K562 (cell line): ENCODE measurements at regions of chr9 and their contacts with region 1.

Region 1: GRCh38 chr9:33816327-33817252 is at the start of gene UBE2R2:
- DNase-seq: peak; percentile 92 to 96 (median 94)
- ATAC-seq: peak; percentile 87
- H3K4me3 ChIP-seq: peak within 1 kb of the TSS; percentile 85
- H3K27ac ChIP-seq: peak within 1 kb of the TSS; percentile 92
- H3K4me1 ChIP-seq: peaks cover 11 to 18% of the 10 kb centered on the region in 2 experiments; a peak in 4 of 5 replicates
- H3K27me3 ChIP-seq: no peaks in the 10 kb centered on the region
- CTCF ChIP-seq: no peak
- EP300 ChIP-seq: no peak
- POLR2A ChIP-seq: peak; percentile 82
- RAD21 ChIP-seq: no peak
- polyA plus RNA-seq, gene UBE2R2: 7.8 to 8.4 TPM

Region 2: DNA sequence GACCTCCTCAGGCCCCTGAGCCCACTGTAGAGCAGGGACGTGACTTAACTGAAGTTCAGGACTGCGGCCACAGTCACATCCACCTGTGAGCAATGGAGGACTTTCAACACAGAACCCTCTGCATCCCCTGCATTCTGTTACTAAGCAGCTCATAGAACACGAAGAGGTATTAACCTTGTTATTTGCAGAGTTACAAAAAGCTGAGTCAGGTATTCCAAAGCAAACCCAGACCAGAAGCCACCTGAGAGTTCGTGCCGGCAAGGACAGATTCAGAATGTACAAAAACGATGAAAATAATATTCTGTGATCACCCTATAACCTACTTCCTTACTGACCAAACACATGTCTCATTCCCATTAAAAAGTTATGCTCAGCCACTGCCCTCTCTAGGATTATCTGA is 54.2 kb before region 1 on chr9:
- CTCF ChIA-PET with region 1: no interaction called
- POLR2A ChIA-PET with region 1: no interaction called
- in situ Hi-C with region 1: no loop called
- intact Hi-C with region 1: no loop called
- DNase-seq: no peak
- ATAC-seq: no peak
- H3K4me3 ChIP-seq: no peak overlapping the region
- H3K27ac ChIP-seq: no peak overlapping the region
- H3K4me1 ChIP-seq: no peaks in the 10 kb centered on the region
- H3K27me3 ChIP-seq: no peaks in the 10 kb centered on the region
- CTCF ChIP-seq: no peak
- EP300 ChIP-seq: no peak
- POLR2A ChIP-seq: no peak
- RAD21 ChIP-seq: no peak

Region 3: GRCh38 chr9:33852216-33852826 is 35.7 kb after region 1 on chr9:
- CTCF ChIA-PET with region 1: interaction called, 3 read pairs
- POLR2A ChIA-PET with region 1: interaction called, 7 read pairs
- in situ Hi-C with region 1: no loop called
- intact Hi-C with region 1: loop called (anchors 1 kb)
- DNase-seq: peak in 2 of 4 experiments; percentile 19 to 54
- ATAC-seq: peak; percentile 79
- H3K4me3 ChIP-seq: no peak overlapping the region
- H3K27ac ChIP-seq: no peak overlapping the region
- H3K4me1 ChIP-seq: peaks cover 0 to 2% of the 10 kb centered on the region in 2 experiments; a peak in 2 of 5 replicates
- H3K27me3 ChIP-seq: no peaks in the 10 kb centered on the region
- CTCF ChIP-seq: peak; percentile 49 to 75 (median 68)
- EP300 ChIP-seq: no peak
- POLR2A ChIP-seq: no peak
- RAD21 ChIP-seq: peak; percentile 53 to 68

Region 4: GRCh38 chr9:33919276-33919897 is 102.8 kb after region 1 on chr9:
- CTCF ChIA-PET with region 1: no interaction called
- POLR2A ChIA-PET with region 1: interaction called, 5 read pairs
- in situ Hi-C with region 1: no loop called
- intact Hi-C with region 1: loop called (anchors 10 kb)
- DNase-seq: no peak
- ATAC-seq: no peak
- H3K4me3 ChIP-seq: no peak overlapping the region
- H3K27ac ChIP-seq: no peak overlapping the region
- H3K4me1 ChIP-seq: no peaks in the 10 kb centered on the region
- H3K27me3 ChIP-seq: no peaks in the 10 kb centered on the region
- CTCF ChIP-seq: no peak
- EP300 ChIP-seq: no peak
- POLR2A ChIP-seq: 0 out of 2 replicates have a peak, but pooled peaks have one; percentile 20
- RAD21 ChIP-seq: no peak

Region 5: GRCh38 chr9:34145165-34145564 is 328.6 kb after region 1 on chr9:
- CTCF ChIA-PET with region 1: no interaction called
- POLR2A ChIA-PET with region 1: no interaction called
- in situ Hi-C with region 1: no loop called
- intact Hi-C with region 1: no loop called
- DNase-seq: no peak
- ATAC-seq: peak; percentile 19; the same call in 1 of the 3 replicates
- H3K4me3 ChIP-seq: no peak overlapping the region
- H3K27ac ChIP-seq: no peak overlapping the region
- H3K4me1 ChIP-seq: peaks cover 10 to 15% of the 10 kb centered on the region in 2 experiments
- H3K27me3 ChIP-seq: no peaks in the 10 kb centered on the region
- CTCF ChIP-seq: no peak
- EP300 ChIP-seq: no peak
- POLR2A ChIP-seq: no peak
- RAD21 ChIP-seq: no peak